ENCODE measurements at regions of chr1 and their contacts with region 1.

Region 1: GRCh38 chr1:108661030-108661620 is at the start of gene HENMT1:
- DNase-seq: peak; percentile 35
- ATAC-seq: peak; percentile 80
- H3K4me3 ChIP-seq: peak within 1 kb of the TSS; percentile 46
- H3K27ac ChIP-seq: peak within 1 kb of the TSS; percentile 14; the same call in 1 of the 2 replicates
- H3K4me1 ChIP-seq: peaks cover 2% of the 10 kb centered on the region; the same call in 1 of the 2 replicates
- H3K27me3 ChIP-seq: no peaks in the 10 kb centered on the region
- CTCF ChIP-seq: no peak
- POLR2A ChIP-seq: no peak
- RAD21 ChIP-seq: no peak
- total RNA-seq, gene HENMT1: 0.28 and 0.54 TPM in 2 replicates

Region 2: DNA sequence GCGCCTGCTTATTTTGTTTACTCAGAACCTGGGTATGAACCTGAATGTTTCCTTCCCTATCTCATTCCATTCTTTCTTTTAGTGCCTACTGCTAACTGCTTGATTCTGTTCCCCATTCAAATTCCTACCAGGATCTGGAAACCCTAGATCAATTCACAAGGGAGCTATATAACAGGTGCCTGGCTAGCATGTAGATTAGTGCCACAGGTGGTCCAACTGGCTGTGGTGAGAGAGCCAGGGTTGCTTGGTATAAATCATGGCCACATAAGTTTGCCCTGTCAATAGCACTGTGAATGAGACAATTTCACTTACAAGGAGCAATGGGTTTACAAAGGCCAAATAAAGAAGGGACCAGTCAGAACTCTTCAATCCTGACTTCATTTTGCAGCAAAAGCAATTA is 24.4 kb after region 1 on chr1:
- CTCF ChIA-PET with region 1: no interaction called
- POLR2A ChIA-PET with region 1: interaction called, 5 read pairs
- dilution Hi-C with region 1: no loop called
- in situ Hi-C with region 1: no loop called
- intact Hi-C with region 1: loop called (anchors 2 kb)
- DNase-seq: no peak
- ATAC-seq: no peak
- H3K4me3 ChIP-seq: no peak overlapping the region
- H3K27ac ChIP-seq: no peak overlapping the region
- H3K4me1 ChIP-seq: no peaks in the 10 kb centered on the region
- H3K27me3 ChIP-seq: 0 out of 2 replicates have a peak, but pooled peaks cover 3% of the 10 kb centered on the region
- CTCF ChIP-seq: no peak
- POLR2A ChIP-seq: no peak
- RAD21 ChIP-seq: no peak